ENCODE measurements at regions of chr10 and their contacts with region 1.

Region 1: DNA sequence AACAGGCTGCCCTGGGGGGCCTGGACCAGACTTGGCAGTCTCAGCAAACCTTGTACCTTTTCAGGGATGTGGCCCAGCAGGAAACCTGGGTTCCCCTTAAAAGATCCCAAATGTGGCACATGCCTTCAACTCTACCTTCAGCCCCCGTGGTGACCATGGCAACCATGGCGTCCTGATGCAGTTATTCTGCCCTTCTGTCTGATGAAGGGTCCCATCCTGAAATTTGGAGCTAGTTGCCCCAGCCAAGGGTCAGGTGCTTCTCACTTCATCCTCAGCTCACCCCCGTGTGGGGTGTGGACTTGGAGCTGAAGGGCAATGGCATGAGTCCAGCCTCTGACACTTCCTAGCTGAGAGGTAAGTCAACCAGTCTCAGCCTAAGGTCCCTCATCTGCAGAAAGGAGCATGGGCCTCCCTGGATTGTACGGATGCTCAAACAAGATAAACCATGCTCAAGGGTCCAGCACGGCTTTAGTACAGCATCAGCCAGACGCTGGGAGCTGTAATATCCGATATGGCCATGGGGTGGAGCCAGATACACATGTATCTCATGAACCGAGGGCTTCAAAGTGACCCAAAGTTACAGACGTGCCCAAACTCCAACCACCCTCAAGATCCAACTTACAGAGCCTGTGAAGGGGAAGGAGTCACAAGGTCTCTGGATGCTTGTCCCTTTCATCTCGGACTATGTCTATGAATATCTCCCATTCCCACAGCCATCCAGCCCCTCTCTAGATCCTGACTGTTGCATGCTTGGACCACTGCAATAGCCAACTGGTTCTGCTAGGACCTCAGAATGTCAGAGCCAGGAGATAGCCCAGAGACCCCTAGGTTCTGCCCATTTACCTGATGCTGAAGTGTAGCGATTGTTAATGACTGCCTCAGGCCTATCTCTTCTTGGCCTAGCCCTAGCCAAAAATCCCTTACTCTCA is 142.5 kb downstream of the SH3PXD2A start:
- DNase-seq: peak; percentile 71 to 74
- ATAC-seq: peak; percentile 79 to 90
- H3K4me3 ChIP-seq: no peak overlapping the region
- H3K27ac ChIP-seq: peak overlapping the region in 1 of 2 experiments; percentile 35; a peak in 2 of 6 replicates
- H3K4me1 ChIP-seq: peaks cover 19% of the 10 kb centered on the region; the same call in 2 of the 3 replicates
- CTCF ChIP-seq: peak; percentile 94
- EP300 ChIP-seq: no peak
- POLR2A ChIP-seq: no peak
- RAD21 ChIP-seq: peak; percentile 98

Region 2: DNA sequence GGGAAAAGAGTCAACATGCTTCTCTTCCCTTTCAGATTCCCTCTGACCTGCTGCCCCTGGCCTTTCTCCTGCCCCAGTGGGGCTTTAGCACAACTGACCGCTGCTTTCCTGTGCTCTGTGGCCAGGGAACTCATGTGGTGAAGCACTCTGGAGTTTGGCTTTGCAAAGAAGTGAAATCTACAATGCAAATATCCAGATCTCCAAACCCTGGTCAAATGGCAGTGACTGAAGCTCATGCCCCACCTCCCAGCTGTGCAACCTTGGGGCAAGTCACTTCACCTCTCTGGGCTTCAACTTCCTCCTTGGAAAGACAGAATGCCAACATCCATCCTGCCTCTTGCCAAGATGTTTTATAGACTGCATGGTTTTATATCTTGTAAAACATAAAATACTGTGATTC is 61.5 kb before region 1 on chr10:
- CTCF ChIA-PET with region 1: no interaction called
- POLR2A ChIA-PET with region 1: no interaction called
- DNase-seq: no peak
- ATAC-seq: no peak
- H3K4me3 ChIP-seq: no peak overlapping the region
- H3K27ac ChIP-seq: no peak overlapping the region
- H3K4me1 ChIP-seq: no peaks in the 10 kb centered on the region
- CTCF ChIP-seq: no peak
- EP300 ChIP-seq: no peak
- POLR2A ChIP-seq: no peak
- RAD21 ChIP-seq: no peak

Region 3: GRCh38 chr10:103685880-103686669 is 26.8 kb before region 1 on chr10:
- CTCF ChIA-PET with region 1: interaction called, 14 read pairs
- POLR2A ChIA-PET with region 1: no interaction called
- DNase-seq: peak; percentile 55 to 91
- ATAC-seq: peak; percentile 79 to 90
- H3K4me3 ChIP-seq: no peak overlapping the region
- H3K27ac ChIP-seq: no peak overlapping the region
- H3K4me1 ChIP-seq: peaks cover 14% of the 10 kb centered on the region
- CTCF ChIP-seq: peak; percentile 79
- EP300 ChIP-seq: no peak
- POLR2A ChIP-seq: no peak
- RAD21 ChIP-seq: peak; percentile 73 to 79

Region 4: DNA sequence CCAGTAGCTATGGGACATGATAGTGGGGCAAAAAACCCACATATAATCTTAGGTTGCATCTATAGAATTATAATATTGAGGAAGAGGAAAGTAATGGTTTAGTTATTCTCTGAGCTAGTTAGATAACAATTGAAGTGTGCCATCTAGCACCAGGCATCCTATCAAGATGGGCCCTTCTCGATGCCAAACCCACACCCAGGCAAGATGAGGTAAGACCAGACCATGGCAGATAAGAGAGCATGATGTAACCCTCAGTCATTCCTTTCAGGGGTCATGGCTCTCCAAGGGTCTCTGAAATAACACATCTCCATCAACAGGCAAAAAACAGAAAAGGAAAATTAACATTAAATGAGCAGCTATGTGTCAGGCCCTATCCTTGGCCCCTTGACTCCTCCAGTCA is 13.8 kb after region 1 on chr10:
- CTCF ChIA-PET with region 1: interaction called, 44 read pairs
- POLR2A ChIA-PET with region 1: no interaction called
- DNase-seq: no peak
- ATAC-seq: no peak
- H3K4me3 ChIP-seq: no peak overlapping the region
- H3K27ac ChIP-seq: no peak overlapping the region
- H3K4me1 ChIP-seq: no peaks in the 10 kb centered on the region
- CTCF ChIP-seq: no peak
- EP300 ChIP-seq: no peak
- POLR2A ChIP-seq: no peak
- RAD21 ChIP-seq: no peak

Region 5: DNA sequence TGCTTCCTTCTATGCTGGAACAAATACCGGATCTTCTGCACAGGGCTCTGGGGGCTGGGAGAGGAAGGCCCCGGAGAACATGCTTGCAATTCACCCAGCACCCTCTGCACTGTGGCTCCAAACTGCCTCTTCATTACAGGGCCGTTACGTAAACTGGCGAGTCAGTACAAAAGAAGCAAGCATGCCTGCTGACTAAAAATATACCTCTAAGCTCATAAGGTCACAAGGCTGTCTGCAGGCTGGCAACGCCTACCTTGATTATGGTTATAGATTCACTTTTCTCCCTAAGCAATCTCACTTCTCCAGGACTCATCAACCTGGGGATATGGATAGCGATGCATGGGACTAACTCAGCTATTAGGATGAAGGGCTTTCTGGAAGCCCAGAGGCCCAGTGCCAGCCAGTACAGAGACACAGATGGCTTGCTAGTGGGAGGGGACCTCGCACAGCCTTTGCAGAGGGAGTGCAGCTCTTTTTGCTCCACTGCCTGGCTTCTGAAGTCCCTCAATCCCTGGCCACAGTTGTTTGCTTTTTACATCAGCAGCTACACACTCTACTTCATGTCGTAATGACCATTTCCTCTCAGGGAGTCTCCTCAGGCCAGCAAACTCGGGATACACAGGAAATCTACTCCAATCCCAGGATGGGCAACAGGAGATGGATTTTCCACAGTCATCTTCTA is 46.4 kb after region 1 on chr10:
- CTCF ChIA-PET with region 1: interaction called, 23 read pairs
- POLR2A ChIA-PET with region 1: no interaction called
- DNase-seq: peak; percentile 55 to 89
- ATAC-seq: peak; percentile 80 to 85
- H3K4me3 ChIP-seq: no peak overlapping the region
- H3K27ac ChIP-seq: peak overlapping the region; percentile 92 to 94
- H3K4me1 ChIP-seq: peaks cover 76% of the 10 kb centered on the region
- CTCF ChIP-seq: no peak
- EP300 ChIP-seq: peak in 1 of 2 experiments; percentile 55; a peak in 1 of 5 replicates
- POLR2A ChIP-seq: no peak
- RAD21 ChIP-seq: peak in 1 of 2 experiments; percentile 38; a peak in 2 of 5 replicates

Region 6: DNA sequence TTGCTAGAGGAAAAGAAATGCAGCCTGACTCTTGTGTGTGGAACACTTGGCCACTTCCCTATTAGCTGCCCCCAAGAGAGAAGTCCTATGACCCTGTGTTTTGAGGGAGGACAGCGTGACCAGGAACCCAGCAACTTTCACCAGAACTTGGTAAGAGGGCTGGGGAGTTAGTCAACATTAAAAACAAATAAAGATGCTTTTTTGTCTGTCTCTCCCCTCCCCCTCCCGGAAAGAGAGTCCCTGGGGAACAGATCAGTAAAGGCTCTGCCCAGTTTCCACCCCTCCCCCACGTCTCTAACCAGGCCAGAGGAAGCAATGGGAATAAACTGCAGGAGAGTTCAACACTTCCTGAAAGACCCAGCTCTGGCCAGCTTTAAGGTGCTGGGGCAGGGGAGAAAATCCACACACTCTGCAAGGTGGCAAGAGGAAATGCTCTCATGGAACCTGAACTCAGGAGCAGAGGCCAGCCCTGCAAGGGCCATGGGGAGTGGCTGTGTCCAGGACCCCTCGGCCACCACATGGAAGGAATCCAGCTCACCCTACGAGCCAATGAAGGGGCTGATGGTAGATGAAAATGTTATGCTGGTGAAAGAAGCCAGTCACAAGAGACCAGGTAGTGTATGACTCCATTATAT is 121.0 kb after region 1 on chr10:
- CTCF ChIA-PET with region 1: interaction called, 15 read pairs
- POLR2A ChIA-PET with region 1: no interaction called
- DNase-seq: peak; percentile 29 to 76
- ATAC-seq: peak; percentile 51 to 78; a peak in 4 of 6 replicates
- H3K4me3 ChIP-seq: 0 out of 3 replicates have a peak overlapping the region, but pooled peaks have one; percentile 8
- H3K27ac ChIP-seq: peak overlapping the region; percentile 72 to 81
- H3K4me1 ChIP-seq: peaks cover 35% of the 10 kb centered on the region
- CTCF ChIP-seq: no peak
- EP300 ChIP-seq: no peak; a peak in 1 of 5 replicates
- POLR2A ChIP-seq: no peak
- RAD21 ChIP-seq: peak in 1 of 2 experiments; percentile 28; a peak in 1 of 5 replicates

Region 7: DNA sequence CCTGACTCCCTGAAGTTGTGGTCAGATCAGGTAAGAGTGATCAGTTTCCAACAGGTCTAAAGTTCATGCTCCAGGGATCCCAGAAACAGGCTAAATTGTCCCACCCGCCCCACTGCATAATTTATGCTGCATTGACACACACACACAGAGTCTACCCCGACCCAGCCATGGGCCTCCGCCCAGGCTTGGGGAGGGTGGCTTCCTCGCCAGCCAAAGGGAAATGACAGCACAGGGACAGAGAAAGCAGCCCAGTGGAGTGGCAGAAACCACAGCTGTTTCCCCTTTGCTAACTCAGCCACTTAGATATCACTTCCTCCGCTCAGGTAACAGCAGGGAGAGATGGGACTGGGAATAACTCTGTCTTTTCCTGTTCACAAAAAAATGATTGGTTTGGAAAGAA is 133.1 kb after region 1 on chr10:
- CTCF ChIA-PET with region 1: interaction called, 184 read pairs
- POLR2A ChIA-PET with region 1: no interaction called
- DNase-seq: no peak
- ATAC-seq: no peak
- H3K4me3 ChIP-seq: no peak overlapping the region
- H3K27ac ChIP-seq: no peak overlapping the region
- H3K4me1 ChIP-seq: no peaks in the 10 kb centered on the region
- CTCF ChIP-seq: no peak
- EP300 ChIP-seq: no peak
- POLR2A ChIP-seq: no peak
- RAD21 ChIP-seq: no peak

Region 8: DNA sequence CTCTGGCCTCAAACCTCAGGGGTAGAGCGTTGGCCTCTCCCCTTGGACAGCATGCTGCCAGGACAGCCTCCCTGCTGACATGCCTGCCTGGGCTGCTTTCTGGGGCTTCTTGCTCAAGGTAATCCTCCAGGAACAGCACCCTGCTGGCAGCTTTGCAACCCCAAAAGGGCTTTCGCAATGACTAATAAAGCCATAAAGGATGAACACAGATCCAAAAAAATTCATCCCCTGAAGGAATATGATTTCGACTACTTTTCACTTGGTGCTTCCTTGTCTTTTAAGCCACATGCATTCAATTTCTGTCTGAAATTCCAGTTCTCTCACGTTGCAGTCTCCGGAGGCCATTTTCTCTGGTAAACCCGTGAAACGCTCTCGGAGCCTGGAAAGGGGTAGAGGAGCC is 157.7 kb after region 1 on chr10:
- CTCF ChIA-PET with region 1: interaction called, 26 read pairs
- POLR2A ChIA-PET with region 1: no interaction called
- DNase-seq: no peak
- ATAC-seq: peak in 1 of 2 experiments; percentile 63; a peak in 3 of 6 replicates
- H3K4me3 ChIP-seq: no peak overlapping the region
- H3K27ac ChIP-seq: peak overlapping the region in 1 of 2 experiments; percentile 40; a peak in 3 of 6 replicates
- H3K4me1 ChIP-seq: peaks cover 15% of the 10 kb centered on the region; the same call in 2 of the 3 replicates
- CTCF ChIP-seq: no peak
- EP300 ChIP-seq: no peak
- POLR2A ChIP-seq: no peak
- RAD21 ChIP-seq: no peak

Region 9: DNA sequence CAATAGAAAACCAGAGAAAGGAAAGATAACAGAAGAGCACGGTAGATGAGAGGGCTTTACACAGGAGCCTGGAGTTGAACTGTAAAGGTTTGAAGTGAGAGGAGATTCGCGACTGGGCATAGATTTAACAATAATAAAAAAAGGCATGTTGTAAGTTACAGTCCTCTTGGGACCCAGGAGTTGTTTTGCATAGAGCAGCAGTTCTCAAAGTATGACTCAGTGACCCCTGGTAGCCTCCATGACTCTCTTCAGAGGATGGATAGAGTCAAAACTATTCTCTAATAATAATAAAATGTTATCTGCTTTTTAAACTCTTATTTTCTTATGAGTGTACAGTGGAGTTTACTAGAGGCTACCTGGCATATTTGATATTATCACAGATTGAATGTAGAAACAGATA is 1190.6 kb after region 1 on chr10:
- CTCF ChIA-PET with region 1: no interaction called
- POLR2A ChIA-PET with region 1: no interaction called
- DNase-seq: no peak
- ATAC-seq: no peak
- H3K4me3 ChIP-seq: no peak overlapping the region
- H3K27ac ChIP-seq: no peak overlapping the region
- H3K4me1 ChIP-seq: no peaks in the 10 kb centered on the region
- CTCF ChIP-seq: no peak
- EP300 ChIP-seq: no peak
- POLR2A ChIP-seq: no peak
- RAD21 ChIP-seq: no peak